Activated CD8-positive, alpha-beta memory T cell treated with anti-CD3 and anti-CD28 coated beads, Interleukin-2, amount 10 ng/mL, durations not matched to agents 7 days and 5 days (primary cell): ENCODE measurements at regions of chr6 and their contacts with region 1.

Region 1: DNA sequence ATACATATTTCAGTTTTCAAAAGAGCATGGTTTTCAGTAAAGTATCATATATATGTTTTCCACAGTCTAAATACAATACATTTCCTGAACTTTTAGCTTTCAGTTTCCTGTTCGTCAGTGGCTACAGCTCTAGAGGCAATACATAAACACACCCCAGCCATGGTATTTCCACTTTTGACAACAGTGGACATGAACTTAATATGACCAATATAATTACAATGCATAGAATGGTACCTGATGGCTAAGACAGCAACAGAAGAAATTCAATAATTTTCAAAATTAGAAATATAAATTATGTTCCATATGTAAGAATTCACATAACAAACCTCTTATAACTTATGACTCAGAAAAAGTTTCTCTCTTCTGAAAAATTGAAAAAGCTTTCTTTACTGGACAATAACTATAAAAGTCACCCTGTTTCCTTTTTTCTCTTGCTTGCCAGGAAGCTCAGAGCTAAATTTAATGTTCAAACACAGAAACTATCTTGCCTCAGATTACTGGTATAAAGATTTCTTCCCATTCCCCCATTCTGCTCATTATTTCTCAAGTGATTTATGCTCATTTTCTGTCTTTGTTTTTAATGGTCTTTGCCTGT is 19.2 kb downstream of the FKBP5 start:
- DNase-seq: no peak
- ATAC-seq: peak; percentile 81
- H3K4me3 Mint-ChIP-seq: peak overlapping the region; percentile 67
- H3K27ac Mint-ChIP-seq: peak overlapping the region; percentile 91
- H3K4me1 Mint-ChIP-seq: peaks cover 39% of the 10 kb centered on the region
- H3K27me3 Mint-ChIP-seq: no peaks in the 10 kb centered on the region

Region 2: DNA sequence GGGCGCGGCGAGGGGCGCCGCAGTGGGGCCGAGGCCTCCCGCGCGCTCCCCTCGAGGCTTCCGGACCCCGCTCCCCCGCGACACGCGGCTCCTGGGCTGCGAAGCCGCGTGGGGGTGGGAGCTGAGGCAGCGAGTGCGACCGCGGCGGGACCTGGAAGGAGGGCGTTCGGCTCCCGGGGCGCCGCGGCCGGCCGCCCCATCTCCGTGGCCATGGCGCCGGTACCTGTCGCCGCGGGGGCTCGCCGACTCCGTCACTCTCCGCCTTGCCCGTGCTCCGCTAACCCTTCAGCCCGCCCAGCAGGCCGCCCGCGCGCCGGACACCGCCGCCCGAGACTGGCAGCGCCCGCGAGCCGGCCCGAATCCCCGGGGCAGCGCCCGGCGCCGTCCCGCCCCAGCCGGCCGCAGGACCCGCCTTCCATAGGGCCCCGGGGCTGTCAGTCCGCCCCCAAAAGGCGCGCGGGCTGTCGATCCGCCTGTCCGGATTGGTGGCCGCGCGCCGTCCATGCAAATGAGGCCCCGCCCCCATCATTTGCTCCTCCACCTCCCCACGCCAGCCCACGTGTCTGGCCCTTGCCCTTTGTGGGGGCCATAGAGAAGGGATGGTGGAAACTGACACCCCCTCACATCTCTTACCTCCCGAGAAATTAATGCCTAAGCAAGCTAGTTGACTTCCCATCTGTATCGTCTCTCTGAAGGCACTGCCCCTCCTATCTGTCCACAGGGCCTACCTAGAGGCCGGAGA is 19.2 kb after region 1 on chr6 and contains the start of gene FKBP5:
- CTCF ChIA-PET with region 1: interaction called, 13 read pairs
- DNase-seq: peak; percentile 95
- ATAC-seq: peak; percentile 95
- H3K4me3 Mint-ChIP-seq: peak within 1 kb of the TSS; percentile 89
- H3K27ac Mint-ChIP-seq: peak within 1 kb of the TSS; percentile 89
- H3K4me1 Mint-ChIP-seq: peaks cover 18% of the 10 kb centered on the region
- H3K27me3 Mint-ChIP-seq: no peaks in the 10 kb centered on the region
- total RNA-seq, gene FKBP5: 53.8 to 70.6 TPM